Activated CD8-positive, alpha-beta T cell treated with anti-CD3 and anti-CD28 coated beads for 36 hours (primary cell): ENCODE measurements at regions of chr17 and their contacts with region 1.

Region 1: DNA sequence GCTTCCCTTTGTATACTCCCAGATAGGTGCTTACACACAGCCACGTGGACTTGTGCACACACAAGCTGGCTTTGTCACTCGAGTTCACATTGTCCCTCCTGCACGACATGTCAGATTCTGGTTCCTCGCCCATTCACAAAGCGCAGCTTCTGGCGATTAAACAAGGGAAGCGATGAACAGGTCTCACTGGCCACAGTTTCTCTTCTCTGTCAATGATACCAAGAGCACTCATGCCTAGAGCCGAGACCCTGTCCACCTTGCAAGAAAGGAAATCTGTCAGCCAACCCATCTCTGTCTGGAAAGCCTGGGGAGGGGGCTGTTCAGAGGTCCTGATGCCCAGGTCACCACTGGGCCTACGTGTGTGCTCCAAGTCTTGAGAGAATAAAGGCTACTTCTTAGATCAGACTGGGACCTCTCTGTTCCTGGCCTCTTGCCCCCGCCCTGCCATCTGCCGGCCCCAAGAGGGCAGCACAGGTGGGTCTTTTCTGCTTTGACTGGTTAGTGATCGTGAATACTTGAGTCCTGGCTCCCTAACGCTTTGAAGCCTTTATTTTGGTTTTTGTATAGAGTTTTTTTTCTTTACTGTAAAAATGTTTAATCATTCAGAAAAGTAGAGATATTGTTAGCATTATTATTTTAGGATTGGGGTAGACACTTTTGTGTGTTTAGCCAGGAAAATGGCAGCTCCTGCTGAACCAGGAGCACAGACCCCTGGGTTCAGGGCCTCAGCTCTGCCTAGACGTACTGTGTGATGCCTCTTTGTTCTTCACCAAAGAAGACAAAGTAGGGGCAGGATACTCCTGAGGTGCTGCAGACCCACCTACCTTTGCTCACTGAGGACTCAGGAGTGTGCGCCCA is 104.7 kb downstream of the MRM1 start:
- DNase-seq: peak; percentile 74
- ATAC-seq: peak; percentile 90
- H3K4me3 Mint-ChIP-seq: no peak overlapping the region
- H3K27ac Mint-ChIP-seq: no peak overlapping the region
- H3K4me1 Mint-ChIP-seq: no peaks in the 10 kb centered on the region
- H3K27me3 Mint-ChIP-seq: peaks cover 28% of the 10 kb centered on the region
- CTCF ChIP-seq: peak; percentile 86

Region 2: GRCh38 chr17:36629252-36629847 is 76.8 kb before region 1 on chr17:
- CTCF ChIA-PET with region 1: interaction called, 7 read pairs
- POLR2A ChIA-PET with region 1: no interaction called
- intact Hi-C with region 1: loop called (anchors 5 kb)
- DNase-seq: peak; percentile 85
- ATAC-seq: peak; percentile 96
- H3K4me3 Mint-ChIP-seq: no peak overlapping the region
- H3K27ac Mint-ChIP-seq: no peak overlapping the region
- H3K4me1 Mint-ChIP-seq: no peaks in the 10 kb centered on the region
- H3K27me3 Mint-ChIP-seq: peaks cover 5% of the 10 kb centered on the region
- CTCF ChIP-seq: peak; percentile 95

Region 3: DNA sequence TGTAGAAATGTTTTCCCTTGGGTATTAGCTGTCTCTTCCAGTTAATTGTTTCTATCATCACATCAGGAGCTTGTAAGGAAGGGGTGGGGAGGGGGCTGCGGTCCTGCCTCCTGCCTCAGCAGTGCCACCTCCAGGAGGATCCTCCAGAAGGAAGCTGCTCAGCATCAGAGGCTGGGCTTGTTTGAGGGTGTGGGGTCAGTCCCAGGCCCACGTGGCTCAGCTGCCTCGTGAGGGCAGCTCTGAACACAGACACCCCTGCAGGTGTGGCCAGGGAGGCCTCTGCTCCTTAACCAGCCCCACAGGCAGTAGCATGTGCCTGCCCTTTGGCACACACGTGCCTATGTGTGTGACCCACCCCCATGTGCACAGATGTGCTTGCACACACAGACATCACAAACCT is 58.5 kb before region 1 on chr17:
- CTCF ChIA-PET with region 1: no interaction called
- POLR2A ChIA-PET with region 1: no interaction called
- intact Hi-C with region 1: no loop called
- DNase-seq: no peak
- ATAC-seq: no peak
- H3K4me3 Mint-ChIP-seq: no peak overlapping the region
- H3K27ac Mint-ChIP-seq: no peak overlapping the region
- H3K4me1 Mint-ChIP-seq: peaks cover 3% of the 10 kb centered on the region
- H3K27me3 Mint-ChIP-seq: peaks cover 32% of the 10 kb centered on the region
- CTCF ChIP-seq: no peak

Region 4: GRCh38 chr17:36717088-36717487 is 11.0 kb after region 1 on chr17:
- CTCF ChIA-PET with region 1: interaction called, 14 read pairs
- POLR2A ChIA-PET with region 1: interaction called, 6 read pairs
- intact Hi-C with region 1: no loop called
- DNase-seq: no peak
- ATAC-seq: no peak
- H3K4me3 Mint-ChIP-seq: no peak overlapping the region
- H3K27ac Mint-ChIP-seq: no peak overlapping the region
- H3K4me1 Mint-ChIP-seq: peaks cover 13% of the 10 kb centered on the region
- H3K27me3 Mint-ChIP-seq: no peaks in the 10 kb centered on the region
- CTCF ChIP-seq: no peak

Region 5: DNA sequence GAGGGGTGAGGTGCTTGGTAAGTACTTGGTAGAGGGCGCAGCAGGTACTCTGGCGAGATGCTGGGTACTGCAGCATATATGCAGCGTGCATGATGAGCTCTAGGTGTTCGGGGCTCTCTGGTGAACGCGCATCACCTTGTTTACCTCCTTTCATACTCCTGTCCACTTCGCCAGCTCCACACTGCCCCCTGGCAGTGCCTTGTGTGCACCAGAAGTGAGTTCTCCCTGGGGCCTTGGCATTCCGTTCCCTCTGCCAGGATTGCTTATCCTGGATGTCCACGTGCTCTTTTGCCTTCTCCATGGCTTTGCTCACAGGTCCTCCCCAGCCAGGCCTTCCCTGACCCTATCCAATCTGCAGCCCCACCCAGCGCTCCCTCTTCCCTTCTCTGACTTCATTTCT is 49.5 kb after region 1 on chr17:
- CTCF ChIA-PET with region 1: interaction called, 11 read pairs
- POLR2A ChIA-PET with region 1: no interaction called
- intact Hi-C with region 1: no loop called
- DNase-seq: peak; percentile 67
- ATAC-seq: peak; percentile 65
- H3K4me3 Mint-ChIP-seq: no peak overlapping the region
- H3K27ac Mint-ChIP-seq: no peak overlapping the region
- H3K4me1 Mint-ChIP-seq: no peaks in the 10 kb centered on the region
- H3K27me3 Mint-ChIP-seq: peaks cover 2% of the 10 kb centered on the region
- CTCF ChIP-seq: peak; percentile 65